PC-9 (cell line): ENCODE measurements at regions of chr9 and their contacts with region 1.

Region 1: GRCh38 chr9:130263601-130264413 is 1.8 kb upstream of the HMCN2 start:
- DNase-seq: no peak
- H3K4me3 ChIP-seq: no peak overlapping the region
- H3K27ac ChIP-seq: no peak overlapping the region
- H3K4me1 ChIP-seq: no peaks in the 10 kb centered on the region
- H3K27me3 ChIP-seq: peaks cover 70% of the 10 kb centered on the region
- CTCF ChIP-seq: no peak

Region 2: DNA sequence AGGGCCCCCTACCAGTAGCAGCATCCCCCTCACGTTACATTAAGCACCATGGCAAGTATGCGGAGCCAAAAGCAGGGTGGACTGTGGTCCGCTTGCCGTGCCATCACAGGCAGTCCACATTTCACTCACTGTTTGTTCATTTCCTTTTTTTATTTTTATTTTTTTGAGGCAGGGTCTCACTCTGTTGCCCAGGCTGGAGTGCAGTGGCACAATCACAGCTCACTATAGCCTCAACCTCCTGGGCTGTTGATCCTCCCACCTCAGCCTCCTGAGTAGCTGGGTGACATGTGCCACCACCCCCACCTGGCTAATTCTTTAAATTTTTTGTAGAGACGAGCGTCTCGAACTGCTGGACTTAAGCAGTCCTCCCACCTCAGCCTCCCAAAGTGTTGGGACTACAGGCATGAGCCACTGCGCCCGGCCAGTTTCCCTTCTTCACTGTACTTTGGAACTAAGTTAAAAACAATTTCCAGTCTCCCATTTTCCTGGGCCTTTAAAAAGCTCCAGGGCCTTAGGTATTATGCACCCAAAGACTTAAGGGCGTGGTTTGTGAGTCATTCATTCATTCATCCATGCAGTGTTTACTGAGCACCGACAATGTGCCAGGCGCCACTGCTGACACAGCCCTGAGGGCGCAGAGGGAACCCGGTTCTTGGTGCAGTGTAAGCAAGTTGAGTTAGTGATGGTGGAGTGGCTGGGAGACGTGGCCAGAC is 578.4 kb before region 1 on chr9:
- CTCF ChIA-PET with region 1: no interaction called
- POLR2A ChIA-PET with region 1: interaction called, 13 read pairs
- intact Hi-C with region 1: no loop called
- DNase-seq: peak; percentile 77 to 87
- H3K4me3 ChIP-seq: no peak overlapping the region
- H3K27ac ChIP-seq: no peak overlapping the region
- H3K4me1 ChIP-seq: peaks cover 16% of the 10 kb centered on the region
- H3K27me3 ChIP-seq: no peaks in the 10 kb centered on the region
- CTCF ChIP-seq: no peak

Region 3: GRCh38 chr9:130156672-130157071 is 107.1 kb before region 1 on chr9:
- CTCF ChIA-PET with region 1: interaction called, 11 read pairs
- POLR2A ChIA-PET with region 1: no interaction called
- intact Hi-C with region 1: no loop called
- DNase-seq: no peak
- H3K4me3 ChIP-seq: no peak overlapping the region
- H3K27ac ChIP-seq: no peak overlapping the region
- H3K4me1 ChIP-seq: no peaks in the 10 kb centered on the region
- H3K27me3 ChIP-seq: no peaks in the 10 kb centered on the region
- CTCF ChIP-seq: no peak

Region 4: GRCh38 chr9:130499804-130500263 is 236.0 kb after region 1 on chr9:
- CTCF ChIA-PET with region 1: no interaction called
- POLR2A ChIA-PET with region 1: interaction called, 13 read pairs
- intact Hi-C with region 1: no loop called
- DNase-seq: peak; percentile 87 to 95
- H3K4me3 ChIP-seq: no peak overlapping the region
- H3K27ac ChIP-seq: no peak overlapping the region
- H3K4me1 ChIP-seq: peaks cover 24% of the 10 kb centered on the region
- H3K27me3 ChIP-seq: no peaks in the 10 kb centered on the region
- CTCF ChIP-seq: no peak